ENCODE measurements at regions of chrX and their contacts with region 1.

Region 1: DNA sequence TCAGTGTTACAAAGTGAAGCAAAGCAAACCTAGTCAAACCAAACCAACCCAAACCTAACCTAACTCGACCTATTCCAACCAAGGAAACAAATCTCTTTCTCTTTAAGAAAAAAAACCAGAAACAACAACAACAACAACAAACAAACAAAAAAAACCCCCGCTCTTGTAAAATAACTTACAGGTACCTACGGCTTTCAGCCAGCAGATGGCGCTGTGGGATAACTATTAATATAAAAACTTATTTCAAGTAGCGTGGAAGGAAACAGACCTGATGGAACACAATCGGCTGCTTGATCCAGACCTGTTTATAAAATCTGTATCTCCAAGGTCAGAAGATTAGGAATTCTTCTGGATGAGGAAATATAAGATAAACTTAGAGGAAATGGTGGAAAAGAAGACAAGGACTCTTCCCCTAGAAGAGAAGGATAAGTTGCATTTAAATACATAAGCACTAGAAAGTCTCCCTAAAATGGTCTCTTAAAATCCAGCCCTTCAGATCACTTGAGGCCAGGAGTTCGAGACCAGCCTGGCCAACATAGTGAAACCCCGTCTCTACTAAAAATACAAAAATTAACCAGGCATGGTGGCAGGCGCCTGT is 34.4 kb upstream of the CDKL5 start:
- DNase-seq: peak; percentile 8 to 78 (median 52)
- ATAC-seq: peak in 2 of 4 experiments; percentile 49 to 56
- H3K4me3 ChIP-seq: no peak overlapping the region
- H3K4me3 Mint-ChIP-seq: no peak overlapping the region
- H3K27ac ChIP-seq: no peak overlapping the region
- H3K27ac Mint-ChIP-seq: peak overlapping the region; percentile 19 to 79
- H3K4me1 ChIP-seq: no peaks in the 10 kb centered on the region
- H3K4me1 Mint-ChIP-seq: peaks cover 0 to 4% (median 2%) of the 10 kb centered on the region in 3 donors
- H3K27me3 ChIP-seq: no peaks in the 10 kb centered on the region
- H3K27me3 Mint-ChIP-seq: no peaks in the 10 kb centered on the region

Region 2: GRCh38 chrX:17736856-17737706 is 654.0 kb before region 1 on chrX and contains the start of gene SCML1:
- CTCF ChIA-PET with region 1: no interaction called
- POLR2A ChIA-PET with region 1: interaction called in 1 of 2 experiments, 11 read pairs
- DNase-seq: peak; percentile 63 to 88 (median 77)
- ATAC-seq: peak; percentile 75 to 85 (median 84)
- H3K4me3 ChIP-seq: peak within 1 kb of the TSS; percentile 60 to 80
- H3K4me3 Mint-ChIP-seq: peak within 1 kb of the TSS; percentile 86 to 98 (median 93)
- H3K27ac ChIP-seq: peak within 1 kb of the TSS; percentile 64
- H3K27ac Mint-ChIP-seq: peak within 1 kb of the TSS; percentile 89 to 93
- H3K4me1 ChIP-seq: peaks cover 8 to 21% of the 10 kb centered on the region in 2 experiments
- H3K4me1 Mint-ChIP-seq: peaks cover 22 to 34% (median 26%) of the 10 kb centered on the region in 3 donors
- H3K27me3 ChIP-seq: peaks cover 0 to 9% of the 10 kb centered on the region in 2 experiments
- H3K27me3 Mint-ChIP-seq: peaks cover 0 to 2% of the 10 kb centered on the region in 2 donors
- total RNA-seq, gene SCML1: 13.6 to 33.0 (median 23.0) TPM

Region 3: GRCh38 chrX:18927522-18927921 is 536.5 kb after region 1 on chrX:
- CTCF ChIA-PET with region 1: no interaction called
- POLR2A ChIA-PET with region 1: interaction called in 1 of 2 experiments, 10 read pairs
- DNase-seq: no peak
- ATAC-seq: no peak
- H3K4me3 ChIP-seq: no peak overlapping the region
- H3K4me3 Mint-ChIP-seq: no peak overlapping the region
- H3K27ac ChIP-seq: no peak overlapping the region
- H3K27ac Mint-ChIP-seq: no peak overlapping the region
- H3K4me1 ChIP-seq: no peaks in the 10 kb centered on the region
- H3K4me1 Mint-ChIP-seq: no peaks in the 10 kb centered on the region
- H3K27me3 ChIP-seq: no peaks in the 10 kb centered on the region
- H3K27me3 Mint-ChIP-seq: no peaks in the 10 kb centered on the region

Measured in T-cell (primary cell).